ENCODE measurements at regions of chr20 and their contacts with region 1.

Region 1: DNA sequence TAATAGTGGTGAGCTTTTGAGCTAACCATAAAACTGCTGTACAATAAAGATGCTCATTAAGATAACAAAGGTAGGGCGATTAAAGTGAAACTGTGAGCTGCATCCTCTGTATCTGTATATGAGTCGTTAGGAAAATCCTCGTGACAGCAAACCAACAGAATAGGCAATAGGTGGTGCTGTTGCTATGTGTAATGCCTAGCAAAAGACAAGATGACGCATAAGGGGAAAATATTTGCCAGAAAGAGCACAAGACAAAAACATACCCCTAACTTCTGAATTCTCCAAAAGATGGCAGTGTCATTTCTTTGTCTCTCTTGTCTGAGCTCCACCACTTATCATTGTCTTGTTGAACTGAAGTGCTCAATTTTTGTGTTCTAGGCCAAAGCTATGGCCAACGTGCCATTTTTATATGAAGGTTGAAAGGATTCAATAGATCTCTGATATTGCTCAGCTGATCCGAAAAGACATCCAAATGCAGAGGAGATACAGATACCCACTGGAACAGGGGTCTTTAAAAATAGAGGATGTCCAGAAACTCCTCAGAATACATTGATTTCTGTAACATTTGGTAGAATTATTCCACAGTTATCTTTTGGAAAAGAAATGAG is 56.3 kb upstream of the ANKEF1 start:
- DNase-seq: peak; percentile 86
- H3K4me3 ChIP-seq: peak overlapping the region in 2 of 3 experiments; percentile 25 to 38
- H3K27ac ChIP-seq: peak overlapping the region; percentile 42
- H3K4me1 ChIP-seq: peaks cover 7% of the 10 kb centered on the region
- H3K27me3 ChIP-seq: no peaks in the 10 kb centered on the region
- CTCF ChIP-seq: peak; percentile 80 to 81

Region 2: DNA sequence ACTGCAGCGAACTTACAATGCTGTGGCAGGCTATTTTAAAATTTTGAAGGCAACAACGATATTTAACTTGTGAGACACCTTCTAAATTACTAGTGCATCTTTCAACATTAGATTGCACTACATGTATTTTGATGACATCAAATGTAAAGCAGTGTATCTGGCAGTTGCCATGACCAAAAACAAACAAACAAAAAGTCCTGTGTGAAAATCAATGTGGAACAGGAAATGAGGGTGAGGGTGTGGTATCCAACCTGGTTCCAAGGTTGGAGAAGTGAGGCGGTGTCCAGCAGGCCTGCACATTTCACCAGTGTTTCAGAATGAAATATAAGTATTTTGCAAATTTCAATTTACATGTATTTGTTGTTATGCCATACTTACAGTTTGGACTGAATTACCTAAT is 352.1 kb before region 1 on chr20:
- CTCF ChIA-PET with region 1: no interaction called
- dilution Hi-C with region 1: no loop called
- in situ Hi-C with region 1: loop called in 1 of 2 experiments (anchors 10 kb)
- intact Hi-C with region 1: no loop called
- DNase-seq: peak; percentile 34
- H3K4me3 ChIP-seq: no peak overlapping the region
- H3K27ac ChIP-seq: no peak overlapping the region
- H3K4me1 ChIP-seq: no peaks in the 10 kb centered on the region
- H3K27me3 ChIP-seq: no peaks in the 10 kb centered on the region
- CTCF ChIP-seq: no peak

Region 3: GRCh38 chr20:10357974-10358373 is 379.5 kb after region 1 on chr20:
- CTCF ChIA-PET with region 1: interaction called, 4 read pairs
- dilution Hi-C with region 1: no loop called
- in situ Hi-C with region 1: no loop called
- intact Hi-C with region 1: loop called (anchors 1 kb)
- DNase-seq: no peak
- H3K4me3 ChIP-seq: no peak overlapping the region
- H3K27ac ChIP-seq: no peak overlapping the region
- H3K4me1 ChIP-seq: no peaks in the 10 kb centered on the region
- H3K27me3 ChIP-seq: no peaks in the 10 kb centered on the region
- CTCF ChIP-seq: peak; percentile 50 to 67

Region 4: DNA sequence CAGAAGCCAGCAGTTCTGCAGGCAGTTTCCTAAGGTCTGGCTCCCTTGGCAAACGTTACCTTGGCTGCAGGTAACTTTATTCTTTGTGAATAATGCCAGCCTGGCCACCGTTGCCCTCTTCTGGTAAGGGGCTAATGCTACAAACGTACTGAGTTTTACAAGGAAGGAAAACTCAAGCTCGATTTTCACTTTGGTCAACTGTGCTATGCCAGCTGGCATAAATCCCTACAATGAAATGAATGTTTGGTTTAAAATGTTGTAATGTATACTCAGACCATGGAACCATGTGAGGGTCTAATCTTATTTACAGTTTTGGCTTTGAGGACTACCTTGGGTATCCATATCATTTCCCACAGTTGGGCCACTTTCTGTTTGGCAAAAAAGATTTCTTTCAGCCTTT is 558.0 kb after region 1 on chr20:
- CTCF ChIA-PET with region 1: no interaction called
- dilution Hi-C with region 1: no loop called
- in situ Hi-C with region 1: no loop called
- intact Hi-C with region 1: loop called (anchors 2 kb)
- DNase-seq: no peak
- H3K4me3 ChIP-seq: no peak overlapping the region
- H3K27ac ChIP-seq: no peak overlapping the region
- H3K4me1 ChIP-seq: peaks cover 28% of the 10 kb centered on the region
- H3K27me3 ChIP-seq: no peaks in the 10 kb centered on the region
- CTCF ChIP-seq: peak; percentile 51 to 76

Region 5: DNA sequence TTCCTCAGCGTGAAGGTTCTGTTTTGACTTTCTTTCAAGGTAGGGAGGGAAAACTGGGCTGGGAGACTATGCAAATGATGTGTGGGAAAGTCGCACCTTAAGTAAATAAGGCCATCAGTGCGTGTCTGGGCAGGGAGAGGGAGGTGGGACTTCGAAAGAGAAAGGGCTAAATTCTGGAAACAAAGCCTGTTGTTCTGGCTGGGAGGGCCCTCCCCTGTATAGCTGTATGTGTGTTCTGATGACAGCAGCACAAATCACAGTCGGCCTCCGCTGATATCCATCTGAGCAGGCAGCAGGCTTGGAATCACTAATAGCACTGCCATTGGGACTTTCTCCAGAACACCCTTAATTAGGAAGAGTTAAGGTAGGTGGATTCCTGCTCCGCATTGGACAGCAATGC is 676.1 kb after region 1 on chr20:
- CTCF ChIA-PET with region 1: no interaction called
- dilution Hi-C with region 1: no loop called
- in situ Hi-C with region 1: loop called in 1 of 2 experiments (anchors 25 kb)
- intact Hi-C with region 1: loop called (anchors 5 kb)
- DNase-seq: peak; percentile 94
- H3K4me3 ChIP-seq: no peak overlapping the region
- H3K27ac ChIP-seq: peak overlapping the region; percentile 47
- H3K4me1 ChIP-seq: peaks cover 33% of the 10 kb centered on the region
- H3K27me3 ChIP-seq: no peaks in the 10 kb centered on the region
- CTCF ChIP-seq: no peak